ENCODE measurements at regions of chr16 and their contacts with region 1.

Region 1: DNA sequence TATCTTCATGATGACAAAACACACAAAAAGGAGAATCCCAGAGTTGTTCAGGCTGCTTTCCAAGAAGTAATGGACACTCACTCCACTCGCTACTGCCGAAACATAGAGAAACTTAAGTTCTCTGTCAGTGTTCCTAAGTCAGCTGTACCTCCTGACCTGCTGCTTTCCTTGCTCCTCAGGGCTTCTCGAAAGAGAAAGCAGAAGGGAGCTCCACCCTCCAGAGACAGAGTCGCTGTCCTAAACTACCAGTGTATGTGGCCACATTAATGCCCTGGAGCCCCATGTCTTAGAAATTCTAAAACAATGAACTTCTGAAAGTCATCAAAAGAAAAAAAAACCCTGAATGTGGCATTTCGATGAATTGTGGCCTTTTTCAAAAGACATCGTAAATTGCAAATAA is 390.8 kb upstream of the MON1B start:
- DNase-seq: no peak
- H3K4me3 Mint-ChIP-seq: peak overlapping the region; percentile 4
- H3K27ac Mint-ChIP-seq: peak overlapping the region; percentile 72
- H3K4me1 Mint-ChIP-seq: peaks cover 31% of the 10 kb centered on the region
- H3K27me3 Mint-ChIP-seq: no peaks in the 10 kb centered on the region
- CTCF ChIP-seq: no peak

Region 2: GRCh38 chr16:76780556-76780955 is 19.6 kb before region 1 on chr16:
- CTCF ChIA-PET with region 1: interaction called, 3 read pairs
- POLR2A ChIA-PET with region 1: interaction called, 6 read pairs
- intact Hi-C with region 1: loop called (anchors 2 kb)
- DNase-seq: peak; percentile 90
- H3K4me3 Mint-ChIP-seq: no peak overlapping the region
- H3K27ac Mint-ChIP-seq: peak overlapping the region; percentile 89
- H3K4me1 Mint-ChIP-seq: peaks cover 67% of the 10 kb centered on the region
- H3K27me3 Mint-ChIP-seq: no peaks in the 10 kb centered on the region
- CTCF ChIP-seq: no peak

Region 3: GRCh38 chr16:76910931-76911330 is 110.7 kb after region 1 on chr16:
- CTCF ChIA-PET with region 1: no interaction called
- POLR2A ChIA-PET with region 1: no interaction called
- intact Hi-C with region 1: no loop called
- DNase-seq: peak; percentile 91
- H3K4me3 Mint-ChIP-seq: peak overlapping the region; percentile 6
- H3K27ac Mint-ChIP-seq: peak overlapping the region; percentile 43
- H3K4me1 Mint-ChIP-seq: peaks cover 18% of the 10 kb centered on the region
- H3K27me3 Mint-ChIP-seq: no peaks in the 10 kb centered on the region
- CTCF ChIP-seq: no peak

Region 4: GRCh38 chr16:77085981-77086380 is 285.8 kb after region 1 on chr16:
- CTCF ChIA-PET with region 1: no interaction called
- POLR2A ChIA-PET with region 1: no interaction called
- intact Hi-C with region 1: no loop called
- DNase-seq: no peak
- H3K4me3 Mint-ChIP-seq: no peak overlapping the region
- H3K27ac Mint-ChIP-seq: no peak overlapping the region
- H3K4me1 Mint-ChIP-seq: peaks cover 5% of the 10 kb centered on the region
- H3K27me3 Mint-ChIP-seq: no peaks in the 10 kb centered on the region
- CTCF ChIP-seq: no peak